Heart left ventricle (tissue), 16 donors: ENCODE measurements at regions of chr2 and their contacts with region 1.

Region 1: DNA sequence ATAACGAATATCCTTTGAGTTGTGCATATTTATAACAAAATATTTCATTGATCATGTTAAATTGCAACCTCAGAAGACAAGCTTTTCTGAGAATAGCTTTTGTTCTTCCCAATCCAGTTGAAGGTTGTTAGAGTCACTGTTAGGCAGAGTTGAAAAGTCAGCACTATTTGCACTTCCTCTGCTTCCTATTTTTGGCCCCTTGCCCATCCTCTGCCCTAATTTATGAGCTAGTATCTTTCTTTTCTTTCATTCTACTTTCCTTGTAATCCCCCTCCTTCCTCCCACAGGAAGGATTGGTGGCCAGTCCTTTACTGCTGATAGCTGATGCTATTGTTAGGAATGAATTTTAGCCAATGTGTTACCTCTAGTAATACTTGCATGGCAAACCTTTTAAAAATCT is 4.9 kb downstream of the RALB start:
- DNase-seq: peak in 1 of 5 donors; percentile 40
- ATAC-seq: no peak
- H3K4me3 ChIP-seq: no peak overlapping the region
- H3K27ac ChIP-seq: peak overlapping the region in 1 of 12 donors; percentile 42
- H3K4me1 ChIP-seq: peaks cover 2 to 73% (median 55%) of the 10 kb centered on the region in 12 donors
- H3K27me3 ChIP-seq: no peaks in the 10 kb centered on the region
- CTCF ChIP-seq: no peak
- POLR2A ChIP-seq: no peak

Region 2: GRCh38 chr2:119240311-119241202 is 1017.0 kb before region 1 on chr2:
- intact Hi-C with region 1: no loop called
- DNase-seq: peak; percentile 63 to 89 (median 83)
- ATAC-seq: peak; percentile 91 to 96 (median 95)
- H3K4me3 ChIP-seq: no peak overlapping the region
- H3K27ac ChIP-seq: peak overlapping the region; percentile 41 to 90 (median 76)
- H3K4me1 ChIP-seq: peaks cover 0 to 15% (median 10%) of the 10 kb centered on the region in 12 donors
- H3K27me3 ChIP-seq: no peaks in the 10 kb centered on the region
- CTCF ChIP-seq: no peak
- POLR2A ChIP-seq: no peak

Region 3: GRCh38 chr2:119759451-119760236 is 497.9 kb before region 1 on chr2 and contains the start of gene PTPN4:
- intact Hi-C with region 1: no loop called
- DNase-seq: peak; percentile 97 to 98 (median 98)
- ATAC-seq: peak; percentile 97 to 98 (median 98)
- H3K4me3 ChIP-seq: peak within 1 kb of the TSS; percentile 62 to 95 (median 86)
- H3K27ac ChIP-seq: peak within 1 kb of the TSS; percentile 87 to 98 (median 96)
- H3K4me1 ChIP-seq: peaks cover 0 to 46% (median 33%) of the 10 kb centered on the region in 12 donors
- H3K27me3 ChIP-seq: no peaks in the 10 kb centered on the region
- CTCF ChIP-seq: peak in 2 of 12 donors; percentile 14 to 16
- POLR2A ChIP-seq: peak in 1 of 2 donors; percentile 84
- total RNA-seq, gene PTPN4: 21.2 to 49.0 (median 43.6) TPM

Region 4: DNA sequence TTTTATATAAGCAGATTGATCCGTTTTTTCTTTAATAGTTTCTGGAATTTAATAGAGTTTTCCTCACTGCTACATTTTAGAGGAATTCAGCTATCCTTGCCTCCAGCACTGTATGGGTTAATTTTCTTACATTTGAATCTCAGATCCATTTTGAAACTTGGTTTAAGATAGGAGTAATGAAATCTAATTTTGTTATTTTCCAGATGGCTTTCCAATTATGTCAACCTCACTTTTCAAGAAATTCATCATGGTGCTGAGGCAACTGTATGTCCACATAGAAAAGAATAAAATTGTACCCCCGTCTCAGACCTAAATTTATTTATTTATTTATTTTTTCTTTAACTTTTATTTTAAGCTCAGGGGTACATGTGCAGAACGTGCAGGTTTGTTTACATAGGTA is 139.5 kb before region 1 on chr2:
- intact Hi-C with region 1: no loop called
- DNase-seq: no peak
- ATAC-seq: no peak
- H3K4me3 ChIP-seq: no peak overlapping the region
- H3K27ac ChIP-seq: no peak overlapping the region
- H3K4me1 ChIP-seq: no peaks in the 10 kb centered on the region
- H3K27me3 ChIP-seq: no peaks in the 10 kb centered on the region
- CTCF ChIP-seq: no peak
- POLR2A ChIP-seq: no peak

Region 5: GRCh38 chr2:120223034-120223912 is 34.2 kb before region 1 on chr2 and contains the start of gene TMEM185B:
- intact Hi-C with region 1: loop called in 4 of 10 experiments (anchors 1 to 5 kb)
- DNase-seq: peak; percentile 90 to 96 (median 92)
- ATAC-seq: peak; percentile 87 to 98 (median 97)
- H3K4me3 ChIP-seq: peak within 1 kb of the TSS; percentile 38 to 89 (median 70)
- H3K27ac ChIP-seq: peak within 1 kb of the TSS; percentile 83 to 98 (median 90)
- H3K4me1 ChIP-seq: peaks cover 0 to 41% (median 25%) of the 10 kb centered on the region in 12 donors
- H3K27me3 ChIP-seq: no peaks in the 10 kb centered on the region
- CTCF ChIP-seq: peak in 7 of 12 donors; percentile 4 to 44 (median 26)
- POLR2A ChIP-seq: peak in 1 of 2 donors; percentile 74
- total RNA-seq, gene TMEM185B: 16.1 to 29.8 (median 26.8) TPM

Region 6: DNA sequence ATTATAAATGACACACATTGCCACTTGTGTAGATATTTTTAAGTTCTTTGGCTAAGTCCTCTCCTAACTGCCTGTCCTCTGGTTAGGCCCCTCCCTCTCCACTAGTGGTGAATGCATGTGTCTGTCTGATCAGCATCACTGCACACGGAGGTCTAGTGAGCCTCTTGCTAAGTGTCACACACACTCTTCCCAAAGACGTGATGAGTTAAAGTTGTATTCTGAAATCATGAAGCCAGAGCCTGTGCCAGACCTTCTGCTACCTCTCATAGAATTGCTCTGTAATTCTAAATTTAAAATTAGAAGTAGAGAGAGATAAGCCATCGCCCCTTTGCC is 36.5 kb after region 1 on chr2:
- intact Hi-C with region 1: loop called in 2 of 10 experiments (anchors 2 to 5 kb)
- DNase-seq: peak in 2 of 5 donors; percentile 41 to 47
- ATAC-seq: peak in 3 of 4 donors; percentile 66 to 94 (median 72)
- H3K4me3 ChIP-seq: no peak overlapping the region
- H3K27ac ChIP-seq: peak overlapping the region in 2 of 12 donors; percentile 23 to 32
- H3K4me1 ChIP-seq: peaks cover 0 to 41% (median 28%) of the 10 kb centered on the region in 12 donors
- H3K27me3 ChIP-seq: no peaks in the 10 kb centered on the region
- CTCF ChIP-seq: no peak
- POLR2A ChIP-seq: no peak

Region 7: GRCh38 chr2:120436885-120437603 is 179.5 kb after region 1 on chr2:
- intact Hi-C with region 1: no loop called
- DNase-seq: no peak
- ATAC-seq: no peak
- H3K4me3 ChIP-seq: no peak overlapping the region
- H3K27ac ChIP-seq: no peak overlapping the region
- H3K4me1 ChIP-seq: peaks cover 0 to 4% (median 4%) of the 10 kb centered on the region in 12 donors
- H3K27me3 ChIP-seq: peaks cover 0 to 29% (median 9%) of the 10 kb centered on the region in 9 donors
- CTCF ChIP-seq: peak in 8 of 12 donors; percentile 6 to 35 (median 17)
- POLR2A ChIP-seq: no peak